GM12878 (cell line): ENCODE measurements at regions of chr13 and their contacts with region 1.

Region 1: DNA sequence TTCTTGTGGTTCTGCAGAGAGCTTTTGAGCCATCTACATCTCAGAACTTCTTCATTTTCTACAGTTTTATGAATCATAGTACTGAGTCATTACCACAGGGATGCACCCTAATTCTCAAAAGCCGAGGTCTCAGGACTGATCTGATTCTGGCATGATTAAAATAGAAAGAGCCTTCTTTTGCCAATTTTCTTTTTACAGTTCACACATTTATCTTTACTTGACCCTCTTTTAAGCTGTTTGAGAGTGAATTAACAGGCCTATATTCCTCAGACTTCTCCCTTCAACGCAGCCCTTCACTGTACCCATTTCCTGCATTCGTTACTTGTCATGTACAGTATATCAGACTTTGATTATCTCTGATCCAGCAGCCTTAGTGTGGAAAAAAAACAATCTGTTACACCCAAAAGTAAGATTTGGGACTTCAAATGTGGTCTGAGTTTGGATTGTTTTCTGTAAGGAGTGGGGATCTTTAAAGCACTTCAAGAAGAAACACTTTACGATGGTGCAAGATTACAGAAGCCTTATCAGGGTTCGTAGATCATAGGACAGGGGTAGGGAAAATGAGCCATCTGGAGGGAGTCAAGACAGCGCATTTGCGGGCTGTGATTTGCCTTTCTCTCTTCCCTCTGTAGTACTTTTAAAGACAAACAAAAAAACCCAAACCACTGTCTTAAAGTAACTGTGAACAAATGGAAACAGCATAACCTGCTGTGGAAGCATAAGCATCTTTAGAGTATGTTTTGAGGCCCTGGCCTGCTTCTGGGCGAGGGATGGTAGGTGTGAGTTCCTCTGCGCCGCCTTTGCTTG is 15.3 kb upstream of the GPR183 start:
- DNase-seq: peak; percentile 85
- ATAC-seq: peak; percentile 92
- H3K4me3 ChIP-seq: peak overlapping the region; percentile 49
- H3K27ac ChIP-seq: peak overlapping the region; percentile 85
- H3K4me1 ChIP-seq: peaks cover 53% of the 10 kb centered on the region
- H3K27me3 ChIP-seq: no peaks in the 10 kb centered on the region
- CTCF ChIP-seq: no peak
- EP300 ChIP-seq: peak; percentile 55 to 84; a peak in 2 of 4 replicates
- POLR2A ChIP-seq: no peak
- RAD21 ChIP-seq: peak; percentile 21; the same call in 1 of the 2 replicates

Region 2: GRCh38 chr13:99296398-99296797 is 26.1 kb before region 1 on chr13:
- CTCF ChIA-PET with region 1: interaction called, 4 read pairs
- POLR2A ChIA-PET with region 1: interaction called, 3 read pairs
- RAD21 ChIA-PET with region 1: interaction called, 17 read pairs
- SMC1A ChIA-PET with region 1: interaction called, 84 read pairs
- in situ Hi-C with region 1: no loop called
- intact Hi-C with region 1: no loop called
- DNase-seq: no peak
- ATAC-seq: peak; percentile 15
- H3K4me3 ChIP-seq: peak overlapping the region; percentile 58; the same call in 1 of the 2 replicates
- H3K27ac ChIP-seq: peak overlapping the region; percentile 62
- H3K4me1 ChIP-seq: peaks cover 14% of the 10 kb centered on the region
- H3K27me3 ChIP-seq: no peaks in the 10 kb centered on the region
- CTCF ChIP-seq: no peak
- EP300 ChIP-seq: no peak
- POLR2A ChIP-seq: no peak
- RAD21 ChIP-seq: peak; percentile 2; the same call in 1 of the 2 replicates

Region 3: GRCh38 chr13:99301913-99302636 is 20.4 kb before region 1 on chr13:
- CTCF ChIA-PET with region 1: interaction called, 4 read pairs
- POLR2A ChIA-PET with region 1: interaction called, 29 read pairs
- RAD21 ChIA-PET with region 1: interaction called, 56 read pairs
- SMC1A ChIA-PET with region 1: interaction called, 84 read pairs
- in situ Hi-C with region 1: no loop called
- intact Hi-C with region 1: loop called (anchors 1 kb)
- DNase-seq: no peak
- ATAC-seq: peak; percentile 39
- H3K4me3 ChIP-seq: peak overlapping the region; percentile 98
- H3K27ac ChIP-seq: peak overlapping the region; percentile 93
- H3K4me1 ChIP-seq: peaks cover 18% of the 10 kb centered on the region
- H3K27me3 ChIP-seq: no peaks in the 10 kb centered on the region
- CTCF ChIP-seq: no peak
- EP300 ChIP-seq: no peak
- POLR2A ChIP-seq: no peak
- RAD21 ChIP-seq: no peak

Region 4: GRCh38 chr13:99347911-99348451 is 25.5 kb after region 1 on chr13:
- CTCF ChIA-PET with region 1: interaction called, 5 read pairs
- POLR2A ChIA-PET with region 1: interaction called, 5 read pairs
- RAD21 ChIA-PET with region 1: interaction called, 29 read pairs
- SMC1A ChIA-PET with region 1: interaction called, 49 read pairs
- in situ Hi-C with region 1: no loop called
- intact Hi-C with region 1: no loop called
- DNase-seq: no peak
- ATAC-seq: peak; percentile 79
- H3K4me3 ChIP-seq: no peak overlapping the region
- H3K27ac ChIP-seq: peak overlapping the region; percentile 54
- H3K4me1 ChIP-seq: peaks cover 31% of the 10 kb centered on the region
- H3K27me3 ChIP-seq: no peaks in the 10 kb centered on the region
- CTCF ChIP-seq: no peak
- EP300 ChIP-seq: no peak
- POLR2A ChIP-seq: no peak
- RAD21 ChIP-seq: no peak

Region 5: GRCh38 chr13:99356158-99357091 is 33.9 kb after region 1 on chr13:
- CTCF ChIA-PET with region 1: interaction called, 5 read pairs
- POLR2A ChIA-PET with region 1: interaction called, 6 read pairs
- RAD21 ChIA-PET with region 1: interaction called, 29 read pairs
- SMC1A ChIA-PET with region 1: interaction called, 49 read pairs
- in situ Hi-C with region 1: no loop called
- intact Hi-C with region 1: loop called (anchors 1 kb)
- DNase-seq: peak; percentile 92
- ATAC-seq: peak; percentile 81
- H3K4me3 ChIP-seq: peak overlapping the region; percentile 41; the same call in 1 of the 2 replicates
- H3K27ac ChIP-seq: peak overlapping the region; percentile 81
- H3K4me1 ChIP-seq: peaks cover 65% of the 10 kb centered on the region
- H3K27me3 ChIP-seq: no peaks in the 10 kb centered on the region
- CTCF ChIP-seq: no peak
- EP300 ChIP-seq: peak; percentile 43 to 83; a peak in 3 of 4 replicates
- POLR2A ChIP-seq: no peak
- RAD21 ChIP-seq: no peak